WTC11 (cell line): ENCODE measurements at regions of chr17 and their contacts with region 1.

Region 1: DNA sequence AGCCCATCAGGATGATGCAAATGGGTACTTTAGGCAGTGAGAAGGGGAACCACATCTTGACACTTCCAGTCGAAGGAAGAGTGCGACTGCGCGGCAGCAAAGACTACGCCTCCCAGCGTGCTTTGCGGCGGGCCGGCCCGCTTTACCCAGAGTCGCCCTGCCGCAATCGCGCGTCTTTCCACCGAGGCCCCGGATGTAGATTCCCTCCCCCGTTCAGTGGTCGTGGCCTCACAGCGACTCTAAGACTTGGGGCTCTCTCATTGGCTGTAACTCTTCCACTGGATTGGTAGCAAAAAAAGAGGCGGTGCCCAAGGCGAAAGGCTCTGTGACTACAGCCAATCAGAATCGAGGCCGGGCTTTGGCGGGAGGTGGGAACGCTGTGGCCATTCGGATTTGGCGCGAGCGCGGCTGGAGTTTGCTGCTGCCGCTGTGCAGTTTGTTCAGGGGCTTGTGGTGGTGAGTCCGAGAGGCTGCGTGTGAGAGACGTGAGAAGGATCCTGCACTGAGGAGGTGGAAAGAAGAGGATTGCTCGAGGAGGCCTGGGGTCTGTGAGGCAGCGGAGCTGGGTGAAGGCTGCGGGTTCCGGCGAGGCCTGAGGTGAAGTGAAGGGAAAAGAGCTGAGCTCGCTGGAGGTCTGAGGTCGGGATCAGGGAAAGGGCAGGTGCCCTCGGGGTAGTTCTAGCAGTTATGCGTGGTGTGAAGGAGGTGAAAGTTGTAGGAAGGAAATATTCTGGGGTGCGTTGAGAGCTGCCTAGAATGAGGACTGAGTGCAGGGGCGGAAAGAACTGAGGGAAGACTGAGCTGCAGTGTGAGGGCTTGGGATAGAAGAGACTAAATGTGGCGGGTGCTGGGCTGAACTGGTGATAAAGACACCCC is at the start of gene CDC6:
- DNase-seq: peak; percentile 98
- ATAC-seq: peak; percentile 97
- H3K4me3 Mint-ChIP-seq: peak within 1 kb of the TSS; percentile 98
- H3K27ac Mint-ChIP-seq: peak within 1 kb of the TSS; percentile 98
- H3K4me1 Mint-ChIP-seq: peaks cover 14% of the 10 kb centered on the region
- H3K27me3 Mint-ChIP-seq: no peaks in the 10 kb centered on the region
- CTCF ChIP-seq: no peak
- total RNA-seq, gene CDC6: 85.9 to 125 TPM (median 87.9 TPM) in 3 replicates

Region 2: DNA sequence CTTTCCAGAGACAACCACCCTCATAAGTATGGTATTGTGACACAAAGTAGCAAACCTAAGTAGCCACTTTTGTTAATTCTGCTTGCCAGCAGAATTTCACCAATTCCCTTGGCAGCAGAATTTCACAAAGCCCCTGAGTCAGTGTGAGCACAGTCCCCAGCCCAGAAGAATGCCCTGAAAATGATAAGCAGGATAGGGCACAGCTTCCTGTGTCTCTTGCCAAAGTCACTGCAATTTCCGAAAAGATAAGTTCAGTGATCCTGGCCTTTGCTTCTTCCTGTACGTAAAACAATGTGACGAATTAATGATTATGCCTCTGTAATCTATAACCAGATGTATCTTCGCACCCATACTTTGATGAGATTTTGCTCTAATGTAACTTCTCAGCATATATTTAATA is 84.6 kb before region 1 on chr17:
- CTCF ChIA-PET with region 1: interaction called, 11 read pairs
- POLR2A ChIA-PET with region 1: no interaction called
- DNase-seq: no peak
- ATAC-seq: no peak
- H3K4me3 Mint-ChIP-seq: no peak overlapping the region
- H3K27ac Mint-ChIP-seq: no peak overlapping the region
- H3K4me1 Mint-ChIP-seq: no peaks in the 10 kb centered on the region
- H3K27me3 Mint-ChIP-seq: peaks cover 5% of the 10 kb centered on the region
- CTCF ChIP-seq: no peak

Region 3: GRCh38 chr17:40264458-40265185 is 23.1 kb before region 1 on chr17:
- CTCF ChIA-PET with region 1: no interaction called
- POLR2A ChIA-PET with region 1: no interaction called
- DNase-seq: no peak
- ATAC-seq: peak; percentile 71
- H3K4me3 Mint-ChIP-seq: no peak overlapping the region
- H3K27ac Mint-ChIP-seq: peak overlapping the region; percentile 48; the same call in 1 of the 2 replicates
- H3K4me1 Mint-ChIP-seq: peaks cover 8% of the 10 kb centered on the region
- H3K27me3 Mint-ChIP-seq: no peaks in the 10 kb centered on the region
- CTCF ChIP-seq: no peak

Region 4: DNA sequence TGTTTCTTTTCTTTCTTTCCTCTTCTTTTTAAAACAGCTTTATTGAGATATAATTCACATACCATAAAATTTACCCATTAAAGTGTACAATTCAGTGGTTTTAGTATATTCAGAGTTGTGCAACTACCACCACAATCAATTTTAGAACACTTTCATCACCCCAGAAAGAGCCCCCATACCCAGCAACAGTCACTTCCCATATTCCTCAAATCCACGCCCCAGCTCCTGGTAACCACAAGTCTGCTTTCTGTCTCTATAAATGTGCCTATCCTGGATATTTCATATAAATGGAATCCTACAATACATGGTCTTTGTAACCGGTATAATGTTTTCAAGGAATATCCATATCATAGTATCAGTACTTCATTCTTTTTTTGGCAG is 40.6 kb after region 1 on chr17:
- CTCF ChIA-PET with region 1: no interaction called
- POLR2A ChIA-PET with region 1: no interaction called
- DNase-seq: no peak
- ATAC-seq: no peak
- H3K4me3 Mint-ChIP-seq: no peak overlapping the region
- H3K27ac Mint-ChIP-seq: no peak overlapping the region
- H3K4me1 Mint-ChIP-seq: peaks cover 14% of the 10 kb centered on the region
- H3K27me3 Mint-ChIP-seq: no peaks in the 10 kb centered on the region; the same call in 1 of the 2 replicates
- CTCF ChIP-seq: no peak